ENCODE measurements at regions of chr5 and their contacts with region 1.

Region 1: DNA sequence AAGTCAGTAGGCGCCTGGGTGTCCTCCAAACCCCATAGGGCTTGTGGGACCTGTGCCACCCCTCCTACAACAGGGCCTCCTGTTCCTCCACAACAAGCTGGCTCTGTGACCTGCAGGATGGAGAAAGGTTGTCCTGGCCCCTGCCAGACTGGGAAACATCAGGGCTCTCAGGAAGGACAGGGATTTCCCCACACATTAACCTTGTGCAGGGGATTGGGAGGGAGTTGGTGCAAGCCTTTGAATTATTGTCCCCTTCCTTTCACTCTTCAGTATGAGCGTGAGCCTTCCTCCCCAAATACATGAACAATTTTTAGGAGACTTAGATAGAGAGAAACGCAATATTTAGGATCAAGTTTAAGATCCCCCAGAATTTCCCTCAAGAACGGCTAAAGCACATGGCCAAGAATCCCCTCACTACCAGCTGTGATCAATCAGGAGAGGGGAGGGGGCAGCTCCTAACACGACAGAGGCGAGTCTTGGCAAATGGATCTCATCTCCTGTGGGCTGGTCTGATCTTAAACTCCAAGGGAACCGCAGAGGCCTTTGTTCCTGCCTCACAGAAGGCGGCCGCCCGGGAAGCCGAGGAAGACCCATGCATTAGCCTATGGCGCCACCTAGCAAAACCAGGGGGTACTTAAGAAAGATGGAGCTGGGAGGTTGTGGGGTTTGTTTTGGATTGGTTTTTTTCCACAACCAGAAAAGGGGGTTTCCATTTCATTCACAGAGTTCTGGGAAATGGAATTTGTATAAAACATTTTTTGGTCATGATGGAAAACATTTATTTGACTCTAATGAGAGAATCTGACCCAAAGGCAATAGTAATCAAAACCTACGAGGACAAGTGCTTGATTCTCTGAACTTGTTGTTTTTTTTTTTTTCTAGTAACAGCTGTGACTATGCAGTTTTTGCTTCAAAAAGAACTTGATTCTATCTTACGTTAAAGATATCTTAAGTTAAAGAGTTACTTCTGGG is 36.1 kb upstream of the OSMR start:
- DNase-seq: peak; percentile 93 to 98 (median 94)
- H3K4me3 ChIP-seq: no peak overlapping the region
- H3K27ac ChIP-seq: peak overlapping the region in 1 of 2 donors; percentile 13
- H3K4me1 ChIP-seq: peaks cover 0 to 2% (median 2%) of the 10 kb centered on the region in 3 donors
- H3K27me3 ChIP-seq: no peaks in the 10 kb centered on the region
- CTCF ChIP-seq: peak; percentile 81

Region 2: DNA sequence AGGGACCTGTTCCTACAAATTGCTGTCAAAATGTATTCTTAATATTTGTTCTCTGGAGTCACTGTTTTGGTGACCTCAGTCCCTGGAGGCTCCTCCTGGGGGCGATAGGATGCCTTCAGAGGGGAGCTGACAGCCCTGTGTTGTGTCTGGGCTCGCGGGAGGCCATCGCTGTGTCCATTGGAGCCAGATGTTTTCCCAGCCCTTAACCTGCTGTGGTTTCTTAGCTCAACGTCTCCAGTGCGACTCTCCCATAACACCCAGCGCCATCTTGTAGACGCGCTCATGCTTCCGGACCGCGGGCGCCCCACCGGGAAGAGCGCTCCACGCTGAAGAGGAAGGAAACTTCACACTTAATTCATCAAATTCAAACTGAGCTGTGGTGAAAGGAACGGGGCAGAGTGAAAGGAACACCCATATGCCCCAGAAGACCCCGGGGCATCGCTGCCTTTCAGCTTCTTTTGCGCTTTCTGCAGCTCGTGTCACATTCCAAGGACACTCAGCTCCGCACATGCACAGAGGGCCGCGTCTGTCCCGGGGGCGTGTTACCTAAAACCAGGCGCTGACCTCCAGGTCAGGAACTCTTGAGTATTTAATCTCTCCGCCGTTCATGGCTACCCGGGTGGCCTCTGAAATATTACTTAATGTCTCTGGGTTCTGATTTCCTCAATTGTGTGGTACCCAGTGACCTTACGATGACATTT is 857.5 kb before region 1 on chr5:
- intact Hi-C with region 1: no loop called
- DNase-seq: peak in 1 of 5 donors; percentile 13
- H3K4me3 ChIP-seq: no peak overlapping the region
- H3K27ac ChIP-seq: no peak overlapping the region
- H3K4me1 ChIP-seq: no peaks in the 10 kb centered on the region
- H3K27me3 ChIP-seq: no peaks in the 10 kb centered on the region
- CTCF ChIP-seq: no peak

Region 3: DNA sequence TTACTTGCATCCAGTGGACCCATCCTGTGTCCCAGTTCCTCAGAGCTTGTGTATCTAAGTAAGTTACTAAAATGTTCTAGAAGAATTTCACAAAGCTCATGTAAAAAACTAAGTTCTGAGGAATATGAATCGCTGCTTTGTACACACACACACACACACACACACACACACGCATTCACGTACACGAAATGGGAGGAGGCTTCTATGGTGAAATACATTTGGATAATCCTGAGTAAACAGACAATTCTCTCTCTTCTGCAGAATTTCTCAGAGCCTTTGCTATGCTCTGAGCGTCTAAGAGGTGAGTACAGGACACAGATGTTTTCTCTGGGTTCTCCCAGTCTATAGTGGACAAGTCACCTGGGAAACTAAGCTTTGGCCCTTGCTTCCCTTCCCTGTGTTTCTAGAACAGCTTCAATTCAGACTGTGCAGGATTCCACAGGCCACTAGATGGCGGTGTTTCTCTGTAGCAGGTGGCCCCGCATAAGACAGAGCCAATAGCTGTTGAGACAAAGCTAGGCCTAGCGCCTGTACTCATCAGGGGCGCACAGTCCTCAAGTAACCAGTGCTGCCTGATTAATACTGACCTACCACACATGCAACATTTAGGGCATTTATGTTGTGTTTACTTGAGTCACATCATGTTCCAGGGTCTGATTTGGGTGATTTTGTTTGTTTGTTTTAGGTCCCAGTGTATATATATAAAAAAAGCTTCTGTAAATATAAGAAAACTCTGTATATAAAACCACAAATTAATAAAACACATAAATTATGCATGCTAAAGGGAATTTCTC is 368.0 kb before region 1 on chr5:
- intact Hi-C with region 1: loop called (anchors 10 kb)
- DNase-seq: peak; percentile 87 to 97 (median 93)
- H3K4me3 ChIP-seq: no peak overlapping the region
- H3K27ac ChIP-seq: no peak overlapping the region
- H3K4me1 ChIP-seq: peaks cover 0 to 2% (median 0%) of the 10 kb centered on the region in 3 donors
- H3K27me3 ChIP-seq: no peaks in the 10 kb centered on the region
- CTCF ChIP-seq: peak; percentile 99

Region 4: DNA sequence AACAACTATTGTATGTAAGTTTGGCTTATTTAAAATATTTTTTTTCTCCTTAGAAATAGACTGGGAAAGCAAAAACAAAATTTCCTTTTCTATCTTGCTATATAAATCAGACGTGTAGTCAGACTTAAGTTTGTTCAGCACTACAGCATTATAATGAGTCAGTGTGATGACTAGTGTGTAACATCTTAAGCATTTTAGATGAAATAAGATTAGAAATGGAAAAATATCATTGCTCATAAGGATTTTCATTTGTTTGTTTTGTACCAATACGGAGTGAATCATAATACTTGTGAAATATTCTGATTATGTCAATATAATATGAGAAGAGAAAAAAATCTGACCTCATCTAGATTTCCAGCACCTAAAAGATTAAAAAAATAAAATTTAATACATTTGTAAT is 329.2 kb after region 1 on chr5:
- intact Hi-C with region 1: no loop called
- DNase-seq: no peak
- H3K4me3 ChIP-seq: no peak overlapping the region
- H3K27ac ChIP-seq: no peak overlapping the region
- H3K4me1 ChIP-seq: no peaks in the 10 kb centered on the region
- H3K27me3 ChIP-seq: no peaks in the 10 kb centered on the region
- CTCF ChIP-seq: no peak